Activated CD4-positive, alpha-beta memory T cell treated with anti-CD3 and anti-CD28 coated beads, Interleukin-2, amount 10 ng/mL, durations not matched to agents 7 days and 5 days (primary cell): ENCODE measurements at regions of chr3 and their contacts with region 1.

Region 1: DNA sequence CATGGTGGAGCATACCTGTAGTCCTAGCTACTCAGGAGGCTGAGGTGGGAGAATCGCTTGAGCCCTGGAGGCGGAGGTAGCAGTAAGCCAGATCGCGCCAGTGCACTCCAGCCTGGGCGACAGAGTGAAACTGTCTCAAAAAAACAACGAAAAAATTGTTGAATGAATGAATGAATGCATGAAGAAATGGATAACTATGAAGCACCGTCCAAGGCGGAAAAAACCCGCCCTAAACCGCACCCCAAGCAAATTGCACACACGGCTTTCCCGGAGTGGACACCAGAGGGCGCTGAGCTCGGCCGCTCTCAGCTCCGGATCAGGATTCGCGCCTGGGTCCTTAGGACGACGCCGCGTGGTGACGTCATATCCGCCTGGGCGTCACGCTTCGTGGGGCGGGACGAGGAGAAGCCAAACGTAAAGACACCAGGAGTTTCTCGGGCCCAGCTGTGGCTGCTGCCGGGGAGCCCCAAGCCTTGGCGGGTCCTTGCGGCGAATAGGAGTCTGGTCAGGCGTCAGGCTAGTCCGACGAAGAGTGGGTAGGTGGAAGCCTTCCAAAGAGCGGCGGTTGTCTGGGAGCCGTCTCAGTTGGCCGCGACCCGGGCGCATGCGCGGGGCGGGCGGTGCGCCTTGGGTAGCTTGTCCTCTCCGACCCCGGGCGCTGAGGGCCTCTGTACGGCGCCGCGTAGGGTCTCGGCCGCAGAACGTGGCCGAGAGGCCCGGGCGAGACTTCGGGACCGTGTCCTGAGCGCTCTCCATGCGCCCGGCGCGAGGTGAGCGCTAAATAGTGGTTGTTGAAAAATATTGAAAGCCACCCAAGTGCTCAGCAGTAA is at the starts of genes HTD2 and RPP14:
- DNase-seq: peak; percentile 99
- H3K4me3 Mint-ChIP-seq: peak within 1 kb of the TSS; percentile 94
- H3K27ac Mint-ChIP-seq: peak within 1 kb of the TSS; percentile 98
- H3K4me1 Mint-ChIP-seq: peaks cover 37% of the 10 kb centered on the region
- H3K27me3 Mint-ChIP-seq: peaks cover 5% of the 10 kb centered on the region
- total RNA-seq, gene HTD2: 6.3 to 8.5 TPM
- total RNA-seq, gene RPP14: 10.7 to 11.2 TPM

Region 2: DNA sequence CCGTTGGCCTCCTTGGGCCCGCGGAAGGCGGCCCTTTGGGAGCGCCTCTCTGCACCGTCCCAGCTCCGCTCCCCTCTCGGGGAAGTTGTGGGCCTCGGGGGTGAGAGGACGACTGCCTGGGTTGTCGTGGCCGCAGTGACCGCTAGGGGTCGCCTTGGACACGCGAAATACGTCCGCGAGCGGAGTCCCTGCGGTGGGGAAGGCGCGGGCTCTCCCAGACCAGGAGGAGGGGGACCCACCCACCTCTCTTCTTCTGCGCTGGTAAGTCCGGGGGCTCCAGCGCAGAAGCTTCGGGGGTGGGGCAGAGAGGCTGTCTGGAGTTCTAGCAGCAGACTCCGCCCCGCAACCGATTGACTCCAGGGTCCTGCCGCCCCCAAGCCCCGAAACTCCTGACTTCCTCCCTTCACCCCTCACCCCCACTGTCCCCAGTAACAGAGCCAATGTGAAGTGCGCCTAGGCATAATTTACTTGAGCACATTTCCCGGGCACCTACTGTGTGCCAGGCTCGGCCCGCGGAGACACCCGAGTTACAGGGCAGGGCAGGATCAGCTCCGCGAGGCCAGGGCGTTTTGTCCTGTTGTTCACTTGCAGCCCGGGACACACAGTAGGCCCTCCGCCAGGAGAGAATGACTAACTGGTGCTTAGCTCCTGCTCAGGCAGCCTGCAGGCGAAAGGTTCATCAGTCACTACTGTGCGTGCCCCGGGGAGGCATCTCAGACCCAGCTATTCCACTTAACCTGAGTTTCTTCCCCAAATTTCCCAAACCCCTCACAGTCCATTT is 128.2 kb before region 1 on chr3:
- CTCF ChIA-PET with region 1: interaction called, 21 read pairs
- POLR2A ChIA-PET with region 1: interaction called, 3 read pairs
- DNase-seq: peak; percentile 89
- H3K4me3 Mint-ChIP-seq: peak overlapping the region; percentile 61
- H3K27ac Mint-ChIP-seq: no peak overlapping the region
- H3K4me1 Mint-ChIP-seq: peaks cover 21% of the 10 kb centered on the region
- H3K27me3 Mint-ChIP-seq: peaks cover 4% of the 10 kb centered on the region

Region 3: GRCh38 chr3:58237238-58237940 is 68.7 kb before region 1 on chr3 and contains the start of gene ABHD6:
- CTCF ChIA-PET with region 1: interaction called, 25 read pairs
- POLR2A ChIA-PET with region 1: interaction called, 10 read pairs
- DNase-seq: peak; percentile 80
- H3K4me3 Mint-ChIP-seq: peak within 1 kb of the TSS; percentile 86
- H3K27ac Mint-ChIP-seq: peak within 1 kb of the TSS; percentile 72
- H3K4me1 Mint-ChIP-seq: peaks cover 12% of the 10 kb centered on the region
- H3K27me3 Mint-ChIP-seq: peaks cover 25% of the 10 kb centered on the region
- total RNA-seq, gene ABHD6: 4.5 to 6.1 TPM

Region 4: DNA sequence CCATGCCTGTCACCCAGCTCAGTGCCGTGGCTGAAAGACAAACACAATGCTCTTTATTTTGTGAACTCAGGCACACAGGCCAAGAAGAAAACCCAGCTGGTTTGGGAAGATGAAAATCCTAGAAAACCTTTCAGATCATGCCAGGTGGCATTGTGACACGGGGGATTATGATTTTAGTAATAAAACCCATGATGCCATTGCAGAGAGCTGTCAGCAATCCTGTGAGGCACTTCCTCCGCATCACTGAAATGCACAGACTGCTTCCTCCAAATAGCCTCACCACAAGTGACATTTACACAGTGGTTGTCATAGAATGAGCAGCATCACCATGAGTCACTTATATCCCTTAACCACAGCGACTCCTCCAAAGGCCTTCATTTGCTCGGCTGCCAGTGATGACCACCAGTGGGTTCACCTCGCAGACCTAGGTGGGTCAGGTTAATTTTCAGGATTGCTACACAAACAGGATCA is 45.8 kb before region 1 on chr3:
- CTCF ChIA-PET with region 1: no interaction called
- POLR2A ChIA-PET with region 1: no interaction called
- DNase-seq: peak; percentile 32
- H3K4me3 Mint-ChIP-seq: no peak overlapping the region
- H3K27ac Mint-ChIP-seq: no peak overlapping the region
- H3K4me1 Mint-ChIP-seq: peaks cover 12% of the 10 kb centered on the region
- H3K27me3 Mint-ChIP-seq: no peaks in the 10 kb centered on the region

Region 5: DNA sequence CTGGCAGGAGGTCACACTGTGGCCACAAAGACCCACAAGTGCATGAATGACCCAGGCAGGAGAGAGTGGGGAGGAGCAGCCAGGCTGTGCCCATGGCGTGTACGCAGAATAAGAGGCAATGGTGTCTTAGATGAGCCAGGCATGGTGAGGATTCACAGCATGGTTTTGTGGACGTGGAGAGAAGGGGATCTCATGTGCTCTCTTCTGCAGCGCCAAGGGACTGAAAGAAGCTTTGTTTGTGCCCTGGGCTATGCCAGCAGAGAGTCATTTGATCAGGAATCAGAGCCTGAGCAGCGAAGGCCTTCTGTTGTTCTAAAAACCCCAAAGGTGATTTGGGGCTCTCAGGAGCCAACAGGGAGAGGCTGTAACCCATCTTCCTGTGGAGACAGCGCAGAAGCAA is 18.7 kb before region 1 on chr3:
- CTCF ChIA-PET with region 1: no interaction called
- POLR2A ChIA-PET with region 1: no interaction called
- DNase-seq: no peak
- H3K4me3 Mint-ChIP-seq: no peak overlapping the region
- H3K27ac Mint-ChIP-seq: no peak overlapping the region
- H3K4me1 Mint-ChIP-seq: no peaks in the 10 kb centered on the region
- H3K27me3 Mint-ChIP-seq: no peaks in the 10 kb centered on the region

Region 6: DNA sequence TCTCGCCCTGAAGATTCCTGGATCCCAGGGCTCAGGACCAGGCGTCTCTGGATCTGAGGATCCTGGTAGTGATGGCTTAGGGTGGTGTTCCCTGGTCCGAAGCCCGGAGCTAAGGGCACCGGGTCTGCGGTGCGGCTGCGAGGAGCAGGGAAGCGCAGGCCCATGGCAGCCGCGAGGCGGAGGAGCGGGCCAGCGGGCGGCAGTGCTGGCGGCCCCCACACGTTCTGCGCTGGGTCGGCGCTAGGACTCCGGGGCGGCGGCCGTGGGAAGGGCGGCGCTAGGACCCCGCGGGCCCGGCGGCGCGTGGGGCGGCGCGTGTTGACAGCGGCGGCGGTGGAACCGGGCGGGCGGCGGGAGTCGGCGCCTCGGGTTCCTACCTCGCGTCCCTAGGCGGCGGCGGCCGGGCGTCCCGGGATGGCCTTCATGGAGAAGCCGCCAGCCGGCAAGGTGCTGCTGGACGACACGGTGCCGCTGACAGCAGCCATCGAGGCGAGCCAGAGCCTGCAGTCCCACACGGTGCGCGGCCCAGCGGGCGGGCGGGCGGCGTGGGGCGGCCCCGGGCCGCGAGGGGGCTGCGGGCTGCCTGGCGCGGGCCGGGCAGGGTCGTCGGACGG is 26.6 kb after region 1 on chr3 and contains the start of gene PXK:
- CTCF ChIA-PET with region 1: interaction called, 50 read pairs
- POLR2A ChIA-PET with region 1: interaction called, 25 read pairs
- DNase-seq: peak; percentile 84
- H3K4me3 Mint-ChIP-seq: peak within 1 kb of the TSS; percentile 100
- H3K27ac Mint-ChIP-seq: peak within 1 kb of the TSS; percentile 98
- H3K4me1 Mint-ChIP-seq: peaks cover 40% of the 10 kb centered on the region
- H3K27me3 Mint-ChIP-seq: no peaks in the 10 kb centered on the region
- total RNA-seq, gene PXK: 50.7 to 51.2 TPM

Region 7: GRCh38 chr3:58366699-58367098 is 60.6 kb after region 1 on chr3:
- CTCF ChIA-PET with region 1: no interaction called
- POLR2A ChIA-PET with region 1: no interaction called
- DNase-seq: no peak
- H3K4me3 Mint-ChIP-seq: no peak overlapping the region
- H3K27ac Mint-ChIP-seq: no peak overlapping the region
- H3K4me1 Mint-ChIP-seq: peaks cover 25% of the 10 kb centered on the region
- H3K27me3 Mint-ChIP-seq: no peaks in the 10 kb centered on the region

Region 8: GRCh38 chr3:58433400-58434169 is 127.5 kb after region 1 on chr3 and contains the start of gene PDHB:
- CTCF ChIA-PET with region 1: interaction called, 9 read pairs
- POLR2A ChIA-PET with region 1: interaction called, 21 read pairs
- DNase-seq: peak; percentile 90
- H3K4me3 Mint-ChIP-seq: peak within 1 kb of the TSS; percentile 83
- H3K27ac Mint-ChIP-seq: peak within 1 kb of the TSS; percentile 84
- H3K4me1 Mint-ChIP-seq: peaks cover 32% of the 10 kb centered on the region
- H3K27me3 Mint-ChIP-seq: peaks cover 10% of the 10 kb centered on the region
- total RNA-seq, gene PDHB: 55.5 to 58.9 TPM

Region 9: DNA sequence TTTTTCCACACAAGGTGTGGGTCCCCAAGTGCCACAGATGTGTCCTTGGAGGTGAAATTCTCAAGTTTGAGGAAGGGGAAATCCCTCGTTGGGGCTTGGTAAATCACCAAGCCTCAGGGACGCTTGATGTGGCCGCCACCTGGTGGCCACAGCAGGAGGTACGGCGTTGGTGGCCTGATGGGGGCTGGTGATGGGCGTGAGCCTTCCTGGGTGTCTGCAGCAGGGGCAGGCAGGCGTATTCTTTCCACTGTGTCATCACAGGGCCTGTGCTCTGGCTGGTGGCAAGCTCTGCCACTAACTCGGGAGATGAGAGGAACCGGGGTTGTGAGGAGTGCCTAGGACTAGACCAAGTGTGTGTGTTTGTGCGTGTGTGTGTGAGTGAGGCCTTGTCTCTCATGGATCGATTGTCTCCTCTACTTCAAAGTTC is 226.7 kb after region 1 on chr3:
- CTCF ChIA-PET with region 1: interaction called, 18 read pairs
- POLR2A ChIA-PET with region 1: no interaction called
- DNase-seq: peak; percentile 82
- H3K4me3 Mint-ChIP-seq: no peak overlapping the region
- H3K27ac Mint-ChIP-seq: no peak overlapping the region
- H3K4me1 Mint-ChIP-seq: peaks cover 14% of the 10 kb centered on the region
- H3K27me3 Mint-ChIP-seq: no peaks in the 10 kb centered on the region